ENCODE measurements at regions of chr12 and their contacts with region 1.

Region 1: GRCh38 chr12:31728917-31729640 is at the start of gene AMN1:
- H3K4me3 Mint-ChIP-seq: peak within 1 kb of the TSS; percentile 80
- H3K27ac Mint-ChIP-seq: peak within 1 kb of the TSS; percentile 88
- H3K4me1 Mint-ChIP-seq: peaks cover 77% of the 10 kb centered on the region
- H3K27me3 Mint-ChIP-seq: no peaks in the 10 kb centered on the region

Region 2: GRCh38 chr12:31715283-31715825 is 13.7 kb before region 1 on chr12:
- intact Hi-C with region 1: loop called (anchors 2 kb)
- H3K4me3 Mint-ChIP-seq: peak overlapping the region; percentile 64
- H3K27ac Mint-ChIP-seq: peak overlapping the region; percentile 95
- H3K4me1 Mint-ChIP-seq: peaks cover 40% of the 10 kb centered on the region
- H3K27me3 Mint-ChIP-seq: no peaks in the 10 kb centered on the region

Region 3: GRCh38 chr12:31749024-31749704 is 20.1 kb after region 1 on chr12:
- intact Hi-C with region 1: loop called (anchors 1 kb)
- H3K4me3 Mint-ChIP-seq: peak overlapping the region; percentile 49
- H3K27ac Mint-ChIP-seq: peak overlapping the region; percentile 84
- H3K4me1 Mint-ChIP-seq: peaks cover 75% of the 10 kb centered on the region
- H3K27me3 Mint-ChIP-seq: no peaks in the 10 kb centered on the region